ENCODE measurements at regions of chr20 and their contacts with region 1.

Region 1: GRCh38 chr20:31851240-31851955 is 6.0 kb upstream of the FOXS1 start:
- DNase-seq: no peak
- ATAC-seq: no peak
- H3K4me3 Mint-ChIP-seq: no peak overlapping the region
- H3K27ac Mint-ChIP-seq: no peak overlapping the region
- H3K4me1 Mint-ChIP-seq: no peaks in the 10 kb centered on the region
- H3K27me3 Mint-ChIP-seq: peaks cover 25% of the 10 kb centered on the region
- CTCF ChIP-seq: no peak

Region 2: DNA sequence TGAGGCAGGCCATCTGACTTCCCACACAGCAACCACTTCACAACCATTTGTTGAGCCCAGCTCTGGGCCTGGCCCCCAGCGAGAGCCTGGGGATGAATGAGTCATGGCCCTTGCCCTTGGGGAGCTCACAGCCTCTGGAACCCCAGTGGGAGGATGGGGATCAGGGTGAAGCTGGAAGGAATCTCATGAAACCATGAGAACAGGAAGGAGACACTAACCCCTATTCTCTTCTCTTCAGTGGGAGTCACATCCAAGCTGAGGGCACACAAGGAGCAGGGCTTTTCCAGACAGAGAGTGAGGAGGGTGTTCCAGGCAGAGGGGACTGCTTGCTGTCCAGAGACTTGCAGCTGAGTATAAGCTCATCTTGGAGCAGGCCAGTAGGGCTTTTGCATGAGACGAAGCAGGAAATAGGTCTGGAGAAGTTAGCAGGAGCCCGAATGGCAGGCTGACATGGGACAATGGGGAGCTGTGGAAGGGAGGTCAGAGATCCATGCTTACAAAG is 13.5 kb before region 1 on chr20:
- CTCF ChIA-PET with region 1: interaction called, 10 read pairs
- POLR2A ChIA-PET with region 1: no interaction called
- intact Hi-C with region 1: no loop called
- DNase-seq: no peak
- ATAC-seq: no peak
- H3K4me3 Mint-ChIP-seq: no peak overlapping the region
- H3K27ac Mint-ChIP-seq: no peak overlapping the region
- H3K4me1 Mint-ChIP-seq: peaks cover 9% of the 10 kb centered on the region
- H3K27me3 Mint-ChIP-seq: no peaks in the 10 kb centered on the region
- CTCF ChIP-seq: no peak

Region 3: GRCh38 chr20:32018269-32019074 is 167.1 kb after region 1 on chr20:
- CTCF ChIA-PET with region 1: interaction called, 14 read pairs
- POLR2A ChIA-PET with region 1: no interaction called
- intact Hi-C with region 1: no loop called
- DNase-seq: peak; percentile 55
- ATAC-seq: peak; percentile 71
- H3K4me3 Mint-ChIP-seq: peak overlapping the region; percentile 85
- H3K27ac Mint-ChIP-seq: no peak overlapping the region
- H3K4me1 Mint-ChIP-seq: peaks cover 23% of the 10 kb centered on the region
- H3K27me3 Mint-ChIP-seq: peaks cover 56% of the 10 kb centered on the region
- CTCF ChIP-seq: no peak

Region 4: DNA sequence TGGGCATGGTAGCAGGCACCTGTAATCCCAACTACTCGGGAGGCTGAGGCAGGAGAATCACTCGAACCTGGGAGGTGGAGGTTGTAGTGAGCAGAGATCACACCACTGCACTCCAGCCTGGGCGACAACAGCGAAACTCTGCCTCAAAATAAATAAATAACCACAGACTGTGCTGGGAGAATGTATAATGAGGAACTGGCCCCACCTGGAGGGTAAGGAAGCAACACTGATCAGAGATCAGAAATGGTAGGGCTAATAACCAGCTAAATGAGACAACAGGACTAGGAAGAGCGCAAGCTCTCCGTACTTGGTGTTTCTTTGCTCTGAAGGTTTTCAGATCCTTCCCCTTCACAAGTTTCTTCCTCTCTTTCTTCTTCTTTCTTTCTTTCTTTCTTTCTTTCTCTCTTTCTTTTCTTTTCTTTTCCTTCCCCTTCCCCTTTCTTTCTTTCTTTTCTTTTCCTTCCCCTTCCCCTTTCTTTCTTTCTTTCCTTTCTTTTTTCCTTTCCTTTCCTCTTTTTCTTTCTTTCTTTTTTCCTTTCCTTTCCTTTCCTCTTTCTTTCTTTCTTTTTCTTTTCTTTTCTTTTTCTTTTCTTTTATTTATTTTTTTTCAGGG is 173.4 kb after region 1 on chr20:
- CTCF ChIA-PET with region 1: interaction called, 47 read pairs
- POLR2A ChIA-PET with region 1: no interaction called
- intact Hi-C with region 1: no loop called
- DNase-seq: no peak
- ATAC-seq: peak; percentile 60
- H3K4me3 Mint-ChIP-seq: no peak overlapping the region
- H3K27ac Mint-ChIP-seq: no peak overlapping the region
- H3K4me1 Mint-ChIP-seq: peaks cover 10% of the 10 kb centered on the region
- H3K27me3 Mint-ChIP-seq: peaks cover 36% of the 10 kb centered on the region
- CTCF ChIP-seq: no peak

Region 5: GRCh38 chr20:32091888-32092346 is 240.5 kb after region 1 on chr20:
- CTCF ChIA-PET with region 1: interaction called, 22 read pairs
- POLR2A ChIA-PET with region 1: no interaction called
- intact Hi-C with region 1: loop called (anchors 1 kb)
- DNase-seq: peak; percentile 68
- ATAC-seq: peak; percentile 92
- H3K4me3 Mint-ChIP-seq: no peak overlapping the region
- H3K27ac Mint-ChIP-seq: no peak overlapping the region
- H3K4me1 Mint-ChIP-seq: peaks cover 14% of the 10 kb centered on the region
- H3K27me3 Mint-ChIP-seq: no peaks in the 10 kb centered on the region
- CTCF ChIP-seq: peak; percentile 70

Measured in activated B cell treated with CpG ODN at 0.5 μM for 24 hours (primary cell).